PC-9 (cell line): ENCODE measurements at regions of chr18 and their contacts with region 1.

Region 1: GRCh38 chr18:3411854-3412268 is 38.1 kb upstream of the TGIF1 start:
- DNase-seq: peak; percentile 72 to 86
- H3K4me3 ChIP-seq: peak overlapping the region; percentile 68
- H3K27ac ChIP-seq: peak overlapping the region; percentile 96
- H3K4me1 ChIP-seq: peaks cover 58% of the 10 kb centered on the region
- H3K27me3 ChIP-seq: no peaks in the 10 kb centered on the region
- CTCF ChIP-seq: no peak

Region 2: DNA sequence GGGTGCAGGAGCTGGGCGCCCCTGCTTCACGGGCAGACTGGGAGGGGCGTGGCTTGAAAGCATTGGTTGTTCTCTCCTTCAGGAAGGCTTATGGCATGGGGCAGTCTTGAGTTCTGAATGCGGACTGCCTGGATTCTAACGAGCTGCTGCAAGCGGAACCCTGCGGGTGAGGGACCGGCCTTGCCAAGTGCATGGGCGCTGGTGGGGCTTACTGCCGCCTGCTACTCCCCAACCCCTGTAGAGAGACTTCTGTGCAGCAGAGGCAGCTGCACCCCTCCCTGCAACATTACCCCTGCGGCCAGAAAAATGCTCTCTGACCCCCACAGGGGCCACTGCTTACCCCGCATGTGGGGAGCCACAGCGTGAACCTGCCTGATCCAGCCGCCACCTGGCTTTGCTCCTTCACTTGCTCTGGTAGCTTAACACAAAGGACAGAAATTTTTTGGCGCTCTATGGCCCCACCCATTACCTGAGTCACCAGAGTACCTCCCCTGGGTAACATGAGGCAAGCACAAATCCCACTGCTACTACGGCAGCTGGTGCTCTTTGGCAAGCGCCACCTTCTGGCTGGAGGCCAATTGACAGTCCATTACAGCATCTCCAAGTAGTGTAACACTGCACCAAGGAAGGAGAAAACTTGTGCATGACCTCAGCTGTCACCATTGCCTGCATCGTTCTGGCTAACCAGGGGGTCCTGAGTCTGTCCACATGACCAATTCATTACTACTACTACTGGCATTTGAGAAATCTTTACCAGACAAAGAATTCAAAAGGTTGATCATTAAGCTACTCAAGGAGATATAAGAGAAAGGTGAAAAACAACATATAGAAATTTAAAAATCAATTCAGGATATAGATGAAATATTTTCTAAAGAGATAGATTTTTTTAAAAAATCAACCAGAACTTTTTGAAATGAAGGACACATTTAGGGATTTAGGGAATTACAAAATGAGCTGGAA is 114.6 kb before region 1 on chr18:
- CTCF ChIA-PET with region 1: interaction called, 7 read pairs
- POLR2A ChIA-PET with region 1: interaction called, 11 read pairs
- intact Hi-C with region 1: no loop called
- DNase-seq: peak; percentile 94 to 95
- H3K4me3 ChIP-seq: peak overlapping the region; percentile 77
- H3K27ac ChIP-seq: peak overlapping the region; percentile 68
- H3K4me1 ChIP-seq: 0 out of 2 replicates have a peak, but pooled peaks cover 8% of the 10 kb centered on the region
- H3K27me3 ChIP-seq: no peaks in the 10 kb centered on the region
- CTCF ChIP-seq: peak; percentile 72

Region 3: DNA sequence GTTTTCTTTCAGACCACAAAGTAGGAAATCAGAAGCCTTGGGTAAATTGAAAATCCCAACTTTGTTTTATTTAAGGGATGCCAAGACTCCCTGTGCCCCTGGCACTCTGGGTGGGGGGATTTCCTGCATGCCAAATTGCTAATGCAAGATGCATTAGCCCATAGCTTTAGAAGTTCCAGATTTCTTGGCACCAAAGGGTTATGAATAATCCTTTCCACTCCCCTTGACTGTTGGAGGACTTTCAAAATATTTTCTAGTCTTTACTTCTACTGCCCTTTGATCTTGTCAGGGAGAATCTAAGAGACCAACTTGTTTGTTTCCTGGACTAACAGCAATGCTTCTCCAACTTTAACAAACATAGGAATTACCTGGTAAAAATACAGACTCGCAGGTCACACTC is 43.7 kb before region 1 on chr18:
- CTCF ChIA-PET with region 1: no interaction called
- POLR2A ChIA-PET with region 1: no interaction called
- intact Hi-C with region 1: loop called (anchors 5 kb)
- DNase-seq: peak; percentile 31 to 47
- H3K4me3 ChIP-seq: no peak overlapping the region
- H3K27ac ChIP-seq: peak overlapping the region; percentile 79
- H3K4me1 ChIP-seq: 0 out of 2 replicates have a peak, but pooled peaks cover 16% of the 10 kb centered on the region
- H3K27me3 ChIP-seq: no peaks in the 10 kb centered on the region
- CTCF ChIP-seq: no peak

Region 4: DNA sequence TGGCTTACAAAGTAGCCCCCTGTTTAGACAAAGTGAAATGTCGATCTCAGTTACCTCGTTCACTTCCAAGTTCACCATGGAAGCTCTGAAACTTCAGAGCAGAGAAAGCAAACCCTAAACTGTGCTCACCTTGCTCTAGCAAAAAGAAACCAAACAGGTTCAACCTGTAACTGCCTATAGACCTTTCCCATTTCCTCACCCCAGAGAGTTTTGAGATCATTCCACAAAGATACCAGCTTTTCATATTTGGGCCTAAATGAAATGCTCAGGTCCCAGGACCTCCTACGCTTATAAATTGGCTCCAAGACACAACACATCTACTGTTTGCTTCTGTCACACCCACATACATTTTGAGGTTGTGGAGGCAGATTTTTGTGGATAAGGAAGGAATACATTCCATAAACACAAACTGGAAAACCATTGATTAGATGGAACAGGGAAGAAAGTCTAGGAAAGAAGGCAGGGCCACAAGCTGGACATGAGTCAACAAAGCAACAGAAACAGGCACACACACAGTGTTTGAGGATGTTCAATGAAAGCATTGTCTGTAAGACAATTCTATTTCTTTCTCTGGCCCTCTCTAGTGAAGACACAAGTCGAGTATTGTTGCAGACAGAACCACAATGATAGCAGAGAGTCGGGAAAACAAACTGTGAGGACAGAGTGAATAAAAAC is 14.7 kb before region 1 on chr18:
- CTCF ChIA-PET with region 1: interaction called, 6 read pairs
- POLR2A ChIA-PET with region 1: interaction called, 12 read pairs
- intact Hi-C with region 1: loop called (anchors 1 kb)
- DNase-seq: peak; percentile 35 to 83
- H3K4me3 ChIP-seq: peak overlapping the region; percentile 30; the same call in 1 of the 2 replicates
- H3K27ac ChIP-seq: peak overlapping the region; percentile 81
- H3K4me1 ChIP-seq: peaks cover 27% of the 10 kb centered on the region
- H3K27me3 ChIP-seq: no peaks in the 10 kb centered on the region
- CTCF ChIP-seq: no peak

Region 5: GRCh38 chr18:3454365-3455089 is 42.7 kb after region 1 on chr18:
- CTCF ChIA-PET with region 1: interaction called, 13 read pairs
- POLR2A ChIA-PET with region 1: interaction called, 6 read pairs
- intact Hi-C with region 1: no loop called
- DNase-seq: peak; percentile 41 to 52
- H3K4me3 ChIP-seq: peak overlapping the region; percentile 83
- H3K27ac ChIP-seq: peak overlapping the region; percentile 96
- H3K4me1 ChIP-seq: peaks cover 49% of the 10 kb centered on the region
- H3K27me3 ChIP-seq: no peaks in the 10 kb centered on the region; the same call in 1 of the 2 replicates
- CTCF ChIP-seq: peak; percentile 79

Region 6: GRCh38 chr18:3481696-3482210 is 69.9 kb after region 1 on chr18:
- CTCF ChIA-PET with region 1: no interaction called
- POLR2A ChIA-PET with region 1: no interaction called
- intact Hi-C with region 1: no loop called
- DNase-seq: no peak
- H3K4me3 ChIP-seq: no peak overlapping the region
- H3K27ac ChIP-seq: no peak overlapping the region
- H3K4me1 ChIP-seq: no peaks in the 10 kb centered on the region
- H3K27me3 ChIP-seq: no peaks in the 10 kb centered on the region
- CTCF ChIP-seq: peak; percentile 58; the same call in 1 of the 2 replicates